ENCODE measurements at regions of chr12 and their contacts with region 1.

Region 1: DNA sequence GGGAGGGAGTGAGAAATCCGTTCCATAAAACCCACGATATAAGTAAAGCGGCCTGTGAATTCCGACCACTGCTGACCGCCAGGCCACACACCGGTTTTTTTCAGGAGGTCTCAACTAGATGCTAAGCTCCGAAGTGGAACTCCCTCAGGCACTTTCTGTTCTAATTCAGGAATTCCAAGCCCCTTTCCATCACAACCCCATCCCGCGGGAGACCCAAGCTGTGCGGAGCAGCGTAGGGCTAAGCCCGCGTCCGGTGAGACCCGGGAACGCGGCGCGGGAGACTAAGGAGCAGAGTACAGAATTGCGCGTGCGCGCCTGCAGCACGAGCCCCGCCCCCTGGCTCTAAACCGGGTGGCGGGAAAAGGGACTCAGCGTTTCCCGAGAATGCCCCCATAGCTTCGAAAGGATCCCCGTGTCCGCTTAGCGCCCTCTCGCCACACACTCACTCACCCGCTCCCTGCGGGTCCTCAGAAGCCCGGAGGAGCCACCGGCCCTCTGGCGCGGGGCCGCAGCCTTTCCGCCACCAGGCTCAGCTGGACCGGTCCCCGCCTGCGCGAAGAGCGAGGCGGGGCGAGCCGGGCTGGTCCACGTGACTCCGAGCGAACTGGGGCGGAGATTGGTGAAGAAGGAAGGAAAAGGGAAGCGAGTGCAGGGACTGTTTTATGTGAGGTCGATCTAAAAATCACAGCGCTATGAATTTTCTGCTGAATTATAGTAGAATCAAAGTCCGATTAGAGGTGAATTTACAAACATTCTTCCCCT is at the start of gene TIMELESS:
- DNase-seq: peak; percentile 67 to 95
- H3K4me3 ChIP-seq: peak within 1 kb of the TSS; percentile 52 to 90 (median 70)
- H3K27ac ChIP-seq: peak within 1 kb of the TSS; percentile 93
- H3K4me1 ChIP-seq: peaks cover 3 to 6% (median 5%) of the 10 kb centered on the region in 4 experiments; a peak in 5 of 7 replicates
- H3K27me3 ChIP-seq: no peaks in the 10 kb centered on the region
- CTCF ChIP-seq: no peak
- EP300 ChIP-seq: 0 out of 3 replicates have a peak, but pooled peaks of 1 of the 2 experiments have one; percentile 7
- POLR2A ChIP-seq: peak; percentile 94 to 95
- RAD21 ChIP-seq: peak in 1 of 2 experiments; percentile 0; a peak in 1 of 4 replicates
- total RNA-seq, gene TIMELESS: 86.7 and 88.7 TPM in 2 replicates

Region 2: DNA sequence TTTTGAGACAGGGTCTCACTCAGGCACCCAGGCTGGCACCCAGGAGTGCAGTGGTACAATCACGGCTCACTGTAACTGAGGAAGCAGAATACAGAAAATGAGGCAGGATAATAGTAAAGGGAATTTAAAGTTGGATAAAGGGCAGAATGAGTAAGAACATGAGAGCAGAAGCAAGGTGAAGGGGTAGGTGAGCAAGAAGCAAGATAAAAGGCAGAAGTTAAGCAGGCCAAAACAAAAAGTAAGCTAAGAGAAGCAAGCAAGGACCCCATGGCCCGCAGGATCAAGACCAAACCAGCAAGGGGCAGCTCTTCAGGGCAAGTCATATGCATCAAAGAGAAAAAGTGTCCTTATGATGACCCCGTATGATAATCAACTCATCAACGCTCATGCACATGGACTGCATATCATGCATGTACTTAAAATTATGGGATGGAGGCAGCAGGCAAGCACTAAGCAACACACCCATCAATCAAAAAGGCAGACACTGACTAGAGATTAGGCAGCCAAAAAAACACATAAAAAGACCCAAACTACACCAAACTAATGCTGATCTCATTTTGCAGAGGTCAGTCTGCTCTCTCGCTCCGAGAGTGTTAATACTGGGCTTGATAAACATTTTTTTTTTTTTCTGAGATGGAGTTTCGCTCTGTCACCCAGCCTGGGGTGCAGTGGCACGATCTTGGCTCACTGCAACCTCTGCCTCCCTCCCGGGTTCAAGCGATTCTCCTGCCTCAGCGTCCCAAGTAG is 11.4 kb before region 1 on chr12:
- CTCF ChIA-PET with region 1: interaction called, 5 read pairs
- POLR2A ChIA-PET with region 1: interaction called, 12 read pairs
- DNase-seq: no peak
- H3K4me3 ChIP-seq: no peak overlapping the region
- H3K27ac ChIP-seq: no peak overlapping the region
- H3K4me1 ChIP-seq: no peaks in the 10 kb centered on the region; a peak in 1 of 7 replicates
- H3K27me3 ChIP-seq: no peaks in the 10 kb centered on the region
- CTCF ChIP-seq: no peak
- EP300 ChIP-seq: no peak
- POLR2A ChIP-seq: no peak
- RAD21 ChIP-seq: no peak

Region 3: GRCh38 chr12:56468216-56469006 is 19.4 kb after region 1 on chr12 and contains the start of gene SPRYD4:
- CTCF ChIA-PET with region 1: interaction called, 124 read pairs
- POLR2A ChIA-PET with region 1: interaction called, 74 read pairs
- DNase-seq: peak; percentile 59 to 90
- H3K4me3 ChIP-seq: peak within 1 kb of the TSS; percentile 80 to 99 (median 87)
- H3K27ac ChIP-seq: peak within 1 kb of the TSS; percentile 90
- H3K4me1 ChIP-seq: peaks cover 3 to 6% (median 5%) of the 10 kb centered on the region in 4 experiments
- H3K27me3 ChIP-seq: no peaks in the 10 kb centered on the region
- CTCF ChIP-seq: peak; percentile 19 to 34 (median 21); a peak in 3 of 4 replicates
- EP300 ChIP-seq: 0 out of 3 replicates have a peak, but pooled peaks of 1 of the 2 experiments have one; percentile 13
- POLR2A ChIP-seq: peak; percentile 98
- RAD21 ChIP-seq: no peak; a peak in 1 of 4 replicates
- total RNA-seq, gene SPRYD4: 4.0 and 4.3 TPM in 2 replicates

Region 4: GRCh38 chr12:56484566-56484965 is 35.5 kb after region 1 on chr12:
- CTCF ChIA-PET with region 1: no interaction called
- POLR2A ChIA-PET with region 1: no interaction called
- DNase-seq: no peak
- H3K4me3 ChIP-seq: no peak overlapping the region
- H3K27ac ChIP-seq: no peak overlapping the region
- H3K4me1 ChIP-seq: peaks cover 2 to 5% (median 3%) of the 10 kb centered on the region in 4 experiments; a peak in 6 of 7 replicates
- H3K27me3 ChIP-seq: peaks cover 7 to 27% (median 25%) of the 10 kb centered on the region in 4 experiments
- CTCF ChIP-seq: no peak
- EP300 ChIP-seq: no peak
- POLR2A ChIP-seq: no peak
- RAD21 ChIP-seq: no peak

Region 5: DNA sequence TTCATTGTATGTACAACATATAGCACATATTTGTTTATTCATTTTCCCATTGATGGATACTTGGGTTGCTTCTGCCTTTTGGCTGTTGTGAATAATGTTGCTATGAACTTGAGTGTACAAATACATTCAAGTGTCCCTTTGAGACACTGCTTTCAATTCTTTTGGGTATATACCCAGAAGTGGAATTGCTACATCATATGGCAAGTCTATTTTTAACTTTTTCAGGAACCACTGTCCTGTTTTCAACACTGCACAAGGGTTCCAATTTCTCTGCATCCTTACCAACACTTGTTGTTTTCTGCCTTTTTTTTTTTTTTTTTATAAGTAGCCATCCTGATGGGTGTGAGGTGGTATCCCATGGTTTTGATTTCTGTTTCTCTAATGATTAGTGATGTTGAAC is 88.5 kb after region 1 on chr12:
- CTCF ChIA-PET with region 1: no interaction called
- POLR2A ChIA-PET with region 1: no interaction called
- DNase-seq: no peak
- H3K4me3 ChIP-seq: no peak overlapping the region
- H3K27ac ChIP-seq: no peak overlapping the region
- H3K4me1 ChIP-seq: no peaks in the 10 kb centered on the region
- H3K27me3 ChIP-seq: no peaks in the 10 kb centered on the region
- CTCF ChIP-seq: no peak
- EP300 ChIP-seq: no peak
- POLR2A ChIP-seq: no peak
- RAD21 ChIP-seq: no peak

Measured in H1 (cell line).